Posterior cingulate gyrus (tissue), 11 donors: ENCODE measurements at regions of chr11 and their contacts with region 1.

Region 1: GRCh38 chr11:122505304-122506006 is 150.1 kb upstream of the UBASH3B start:
- DNase-seq: peak; percentile 74 to 98 (median 84)

Region 2: GRCh38 chr11:122108192-122108799 is 397.2 kb before region 1 on chr11:
- intact Hi-C with region 1: loop called (anchors 10 kb)
- DNase-seq: peak in 1 of 10 donors; percentile 69

Region 3: GRCh38 chr11:122215244-122215992 is 290.0 kb before region 1 on chr11:
- intact Hi-C with region 1: loop called (anchors 1 kb)
- DNase-seq: peak; percentile 63 to 97 (median 78)

Region 4: DNA sequence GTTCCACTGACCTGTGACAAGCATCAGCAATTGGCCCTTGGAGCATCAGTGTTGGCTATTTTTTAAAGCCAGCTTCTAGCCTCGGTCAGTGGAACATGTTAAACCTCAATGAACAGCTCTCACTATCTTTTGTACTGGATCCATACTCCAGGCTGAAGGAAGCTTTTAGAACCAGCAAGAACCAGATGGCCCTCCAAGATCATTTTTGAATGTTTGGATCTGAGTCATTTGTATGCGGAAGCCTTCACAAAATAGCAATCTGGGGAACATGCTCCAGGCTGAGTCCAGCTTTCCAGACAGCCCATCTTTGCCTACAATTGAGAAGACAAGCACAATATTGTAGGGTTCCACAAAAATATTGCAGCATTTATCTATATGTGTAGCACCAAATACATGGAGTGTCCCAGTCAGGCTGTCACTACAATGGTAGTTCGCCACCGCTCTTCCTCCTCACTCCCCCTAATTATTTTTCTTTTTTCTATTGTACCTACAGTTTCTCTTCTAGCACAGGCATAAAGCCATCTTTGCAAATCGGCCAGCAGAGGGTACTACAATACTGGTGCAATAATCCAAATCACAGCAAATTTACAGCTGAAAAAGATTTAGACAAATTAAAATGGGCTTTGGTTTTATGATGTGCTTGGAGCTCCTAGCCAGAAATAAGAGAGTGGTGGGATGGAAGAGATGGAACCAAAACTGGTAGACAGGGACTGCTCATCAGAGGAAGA is 212.0 kb before region 1 on chr11:
- intact Hi-C with region 1: loop called (anchors 1 kb)
- DNase-seq: peak in 1 of 10 donors; percentile 24

Region 5: DNA sequence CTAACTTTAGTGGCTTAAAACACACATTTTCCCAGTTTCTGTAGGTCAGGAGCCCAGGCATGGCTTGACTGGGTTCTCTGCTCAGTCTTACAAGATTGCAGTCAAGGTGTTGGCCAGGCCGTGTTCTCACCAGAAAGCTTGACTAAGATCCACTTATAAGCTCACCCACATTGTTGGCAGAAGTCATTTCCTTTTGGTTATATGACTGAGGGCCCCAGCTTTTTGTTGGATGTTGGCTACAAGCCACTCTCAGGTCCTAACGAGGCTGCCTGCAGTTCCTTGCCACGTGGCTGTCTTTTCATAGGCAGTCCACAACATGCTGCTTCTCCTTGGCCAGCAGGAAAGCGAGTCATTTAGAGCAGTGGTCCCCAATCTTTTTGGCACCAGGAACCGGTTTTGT is 253.5 kb after region 1 on chr11:
- intact Hi-C with region 1: no loop called
- DNase-seq: no peak